ENCODE measurements at regions of chrX and their contacts with region 1.

Region 1: DNA sequence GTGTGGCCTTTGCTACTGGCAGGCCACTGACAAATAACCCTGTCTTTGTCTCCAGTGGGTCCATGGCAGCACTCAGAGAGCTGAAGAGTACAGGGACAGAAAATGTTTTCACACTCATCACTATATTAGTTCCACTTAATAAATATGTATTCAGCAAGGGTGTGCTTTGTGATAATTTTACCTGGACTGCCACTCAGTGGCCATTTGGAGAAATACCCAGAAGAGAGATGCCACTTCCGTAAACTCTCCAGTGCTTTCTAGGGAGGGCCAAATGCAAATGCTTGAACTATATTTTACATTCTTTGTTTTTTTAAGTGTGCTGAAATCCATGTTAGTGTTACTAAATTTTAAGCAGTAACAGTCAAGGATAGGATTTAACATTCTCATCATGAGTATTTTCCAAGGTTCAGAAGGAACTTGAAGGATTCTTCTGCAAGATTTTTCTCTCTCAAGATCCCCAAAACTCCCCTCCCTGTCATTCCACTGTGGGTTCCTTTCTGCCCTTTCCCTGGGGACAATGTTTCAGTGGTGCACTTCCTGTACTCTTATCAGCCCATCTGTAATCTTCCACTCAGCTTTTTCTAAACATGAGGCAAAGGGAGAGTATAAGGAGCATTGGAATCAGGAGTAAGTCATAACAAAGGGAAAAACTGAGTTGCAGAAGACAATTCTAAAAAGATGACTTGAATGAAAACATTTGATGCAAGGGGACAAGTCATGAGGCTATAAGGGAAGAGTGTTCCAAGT is 46.0 kb downstream of the TFDP3 start:
- DNase-seq: peak; percentile 22
- ATAC-seq: peak; percentile 90
- H3K4me3 ChIP-seq: no peak overlapping the region
- H3K27ac ChIP-seq: no peak overlapping the region
- H3K4me1 ChIP-seq: no peaks in the 10 kb centered on the region
- H3K27me3 ChIP-seq: no peaks in the 10 kb centered on the region
- CTCF ChIP-seq: peak; percentile 38 to 53 (median 51); a peak in 5 of 6 replicates
- POLR2A ChIP-seq: no peak
- RAD21 ChIP-seq: peak; percentile 70

Region 2: GRCh38 chrX:132612821-132613564 is 559.1 kb before region 1 on chrX:
- CTCF ChIA-PET with region 1: no interaction called
- POLR2A ChIA-PET with region 1: no interaction called
- RAD21 ChIA-PET with region 1: no interaction called
- intact Hi-C with region 1: no loop called
- DNase-seq: peak; percentile 12
- ATAC-seq: peak; percentile 77
- H3K4me3 ChIP-seq: no peak overlapping the region
- H3K27ac ChIP-seq: no peak overlapping the region
- H3K4me1 ChIP-seq: no peaks in the 10 kb centered on the region
- H3K27me3 ChIP-seq: no peaks in the 10 kb centered on the region
- CTCF ChIP-seq: peak; percentile 39 to 64 (median 60); a peak in 5 of 6 replicates
- POLR2A ChIP-seq: no peak
- RAD21 ChIP-seq: peak; percentile 69

Region 3: GRCh38 chrX:132740316-132741123 is 431.6 kb before region 1 on chrX:
- CTCF ChIA-PET with region 1: no interaction called
- POLR2A ChIA-PET with region 1: no interaction called
- RAD21 ChIA-PET with region 1: no interaction called
- intact Hi-C with region 1: loop called (anchors 1 kb)
- DNase-seq: no peak
- ATAC-seq: no peak
- H3K4me3 ChIP-seq: no peak overlapping the region
- H3K27ac ChIP-seq: no peak overlapping the region
- H3K4me1 ChIP-seq: peaks cover 19 to 36% of the 10 kb centered on the region in 2 experiments
- H3K27me3 ChIP-seq: no peaks in the 10 kb centered on the region
- CTCF ChIP-seq: peak; percentile 33 to 64 (median 61); a peak in 5 of 6 replicates
- POLR2A ChIP-seq: no peak
- RAD21 ChIP-seq: peak; percentile 65

Region 4: DNA sequence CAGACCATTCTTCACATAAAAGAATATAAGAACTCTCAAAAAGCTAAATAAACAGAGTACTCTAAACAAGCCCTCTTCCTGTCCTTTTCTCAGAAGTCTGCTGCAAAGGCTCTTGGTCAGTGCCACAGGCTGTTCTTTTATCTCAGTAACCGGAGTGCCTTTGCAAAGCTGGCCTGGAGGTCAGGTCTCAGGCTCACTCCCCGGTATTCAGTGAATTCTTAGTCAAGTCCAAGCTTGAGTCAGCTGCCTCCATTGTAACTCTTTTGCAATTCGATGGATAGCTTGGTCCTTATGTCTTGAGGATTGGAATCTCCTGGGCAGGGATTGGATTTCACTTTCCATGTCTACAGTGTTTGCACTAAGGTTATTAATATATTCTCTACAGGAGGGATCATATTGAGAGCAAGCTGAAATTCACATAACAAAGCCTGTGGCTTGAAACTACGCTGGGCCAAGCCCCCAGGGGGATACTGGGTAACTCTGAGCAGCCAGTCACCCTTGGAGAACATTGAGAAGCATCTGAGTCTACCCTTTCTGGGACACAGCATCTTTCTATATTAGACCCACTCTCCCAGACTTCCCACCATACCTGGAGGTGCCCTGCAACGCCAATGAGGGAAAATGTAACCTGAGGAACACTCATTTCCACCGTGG is 203.7 kb before region 1 on chrX:
- CTCF ChIA-PET with region 1: no interaction called
- POLR2A ChIA-PET with region 1: no interaction called
- RAD21 ChIA-PET with region 1: no interaction called
- intact Hi-C with region 1: loop called (anchors 10 kb)
- DNase-seq: no peak
- ATAC-seq: no peak
- H3K4me3 ChIP-seq: no peak overlapping the region
- H3K27ac ChIP-seq: no peak overlapping the region
- H3K4me1 ChIP-seq: no peaks in the 10 kb centered on the region
- H3K27me3 ChIP-seq: no peaks in the 10 kb centered on the region
- CTCF ChIP-seq: no peak
- POLR2A ChIP-seq: no peak
- RAD21 ChIP-seq: no peak

Region 5: GRCh38 chrX:133838761-133839676 is 666.9 kb after region 1 on chrX:
- CTCF ChIA-PET with region 1: no interaction called
- POLR2A ChIA-PET with region 1: no interaction called
- RAD21 ChIA-PET with region 1: no interaction called
- intact Hi-C with region 1: no loop called
- DNase-seq: peak; percentile 3
- ATAC-seq: peak; percentile 53; the same call in 1 of the 2 replicates
- H3K4me3 ChIP-seq: no peak overlapping the region
- H3K27ac ChIP-seq: no peak overlapping the region
- H3K4me1 ChIP-seq: no peaks in the 10 kb centered on the region
- H3K27me3 ChIP-seq: no peaks in the 10 kb centered on the region
- CTCF ChIP-seq: peak; percentile 40 to 64 (median 61); a peak in 5 of 6 replicates
- POLR2A ChIP-seq: no peak
- RAD21 ChIP-seq: peak; percentile 30; the same call in 1 of the 2 replicates

Measured in HCT116 (cell line).